Activated naive CD4-positive, alpha-beta T cell treated with anti-CD3 and anti-CD28 coated beads for 36 hours (primary cell): ENCODE measurements at regions of chr22 and their contacts with region 1.

Region 1: GRCh38 chr22:46542011-46542985 is 4.9 kb upstream of the CELSR1 start:
- DNase-seq: peak; percentile 79
- H3K4me3 Mint-ChIP-seq: no peak overlapping the region
- H3K27ac Mint-ChIP-seq: no peak overlapping the region
- H3K4me1 Mint-ChIP-seq: peaks cover 12% of the 10 kb centered on the region
- H3K27me3 Mint-ChIP-seq: peaks cover 21% of the 10 kb centered on the region

Region 2: GRCh38 chr22:46013460-46014416 is 528.6 kb before region 1 on chr22:
- CTCF ChIA-PET with region 1: no interaction called
- intact Hi-C with region 1: loop called (anchors 10 kb)
- DNase-seq: peak; percentile 97
- H3K4me3 Mint-ChIP-seq: peak overlapping the region; percentile 81
- H3K27ac Mint-ChIP-seq: peak overlapping the region; percentile 83
- H3K4me1 Mint-ChIP-seq: peaks cover 5% of the 10 kb centered on the region
- H3K27me3 Mint-ChIP-seq: no peaks in the 10 kb centered on the region

Region 3: GRCh38 chr22:46122511-46122971 is 419.8 kb before region 1 on chr22:
- CTCF ChIA-PET with region 1: interaction called, 7 read pairs
- intact Hi-C with region 1: loop called (anchors 2 kb)
- DNase-seq: peak; percentile 80
- H3K4me3 Mint-ChIP-seq: no peak overlapping the region
- H3K27ac Mint-ChIP-seq: no peak overlapping the region
- H3K4me1 Mint-ChIP-seq: no peaks in the 10 kb centered on the region
- H3K27me3 Mint-ChIP-seq: no peaks in the 10 kb centered on the region

Region 4: DNA sequence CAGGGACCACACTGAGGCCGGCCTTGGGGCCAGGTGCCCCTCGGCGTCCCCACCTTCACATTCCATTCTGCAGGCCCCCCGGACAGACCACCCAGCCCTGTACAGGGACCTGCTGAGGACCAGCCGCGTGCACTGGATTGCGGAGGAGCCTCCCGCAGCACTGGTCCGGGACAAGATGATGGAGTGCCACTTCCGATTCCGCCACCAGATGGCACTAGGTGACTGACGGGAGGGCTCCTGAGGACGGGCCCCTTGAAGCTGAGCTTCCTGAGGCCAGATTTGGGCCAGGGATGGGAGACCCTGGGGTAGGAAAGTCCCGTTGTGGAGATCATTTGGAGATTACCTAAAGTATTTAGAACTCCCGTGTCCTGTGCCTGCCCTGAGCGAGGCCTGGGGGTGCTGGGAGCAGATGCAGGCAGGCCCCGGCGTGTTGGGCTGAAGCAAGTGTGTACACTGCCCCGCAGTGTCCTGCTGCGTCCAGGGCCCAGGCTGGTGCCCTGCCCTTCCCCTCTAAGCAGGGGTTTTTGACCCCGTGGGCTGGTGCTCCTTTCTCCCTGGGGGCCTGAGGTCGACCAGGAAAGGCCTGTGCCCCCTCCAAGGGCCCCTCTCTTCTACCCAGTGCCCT is 186.8 kb before region 1 on chr22:
- CTCF ChIA-PET with region 1: interaction called, 3 read pairs
- intact Hi-C with region 1: loop called (anchors 1 kb)
- DNase-seq: peak; percentile 78
- H3K4me3 Mint-ChIP-seq: no peak overlapping the region
- H3K27ac Mint-ChIP-seq: peak overlapping the region; percentile 65
- H3K4me1 Mint-ChIP-seq: no peaks in the 10 kb centered on the region
- H3K27me3 Mint-ChIP-seq: no peaks in the 10 kb centered on the region

Region 5: GRCh38 chr22:46367707-46368191 is 174.5 kb before region 1 on chr22:
- CTCF ChIA-PET with region 1: interaction called, 57 read pairs
- intact Hi-C with region 1: loop called (anchors 1 kb)
- DNase-seq: peak; percentile 80
- H3K4me3 Mint-ChIP-seq: no peak overlapping the region
- H3K27ac Mint-ChIP-seq: no peak overlapping the region
- H3K4me1 Mint-ChIP-seq: peaks cover 16% of the 10 kb centered on the region
- H3K27me3 Mint-ChIP-seq: peaks cover 3% of the 10 kb centered on the region